Panc1 (cell line): ENCODE measurements at regions of chr2 and their contacts with region 1.

Region 1: DNA sequence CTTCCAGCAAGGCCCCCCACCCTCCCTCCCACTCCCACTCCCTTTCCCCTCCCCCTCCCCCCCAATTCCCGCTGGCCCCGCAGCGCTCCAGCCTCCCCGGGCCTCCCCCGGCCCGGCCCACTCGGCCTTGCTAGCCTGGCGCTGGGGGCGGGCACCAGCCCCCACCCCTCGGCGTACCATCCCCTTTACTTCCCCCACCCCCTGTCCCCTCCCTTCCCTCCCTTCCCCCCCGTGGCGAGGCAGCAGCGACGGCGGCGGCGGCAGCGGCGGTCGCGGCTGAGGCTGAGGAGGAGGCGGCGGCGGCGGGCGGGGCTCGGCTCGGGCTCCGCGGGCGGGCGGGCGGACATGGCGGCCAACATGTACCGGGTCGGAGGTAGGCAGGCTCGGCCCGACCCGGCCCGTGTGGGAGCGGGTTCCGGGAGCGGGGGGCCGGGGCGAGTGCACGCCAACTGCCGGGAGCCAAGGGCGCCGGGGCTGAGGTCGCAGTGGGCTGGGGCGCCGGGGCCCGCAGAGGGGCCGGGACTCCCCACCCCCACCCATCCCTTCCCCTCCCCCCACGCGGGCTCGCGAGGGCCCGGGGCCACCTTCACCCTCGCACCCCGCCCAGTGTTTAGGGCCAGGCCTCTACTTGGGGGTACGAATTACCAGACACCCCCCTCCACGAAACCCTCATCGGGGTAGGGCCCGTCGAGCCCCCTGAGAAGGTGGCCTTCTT is at the start of gene MTA3:
- DNase-seq: no peak
- ATAC-seq: peak; percentile 79
- H3K4me3 ChIP-seq: peak within 1 kb of the TSS; percentile 69 to 82
- H3K27ac ChIP-seq: peak within 1 kb of the TSS; percentile 95
- H3K4me1 ChIP-seq: peaks cover 28% of the 10 kb centered on the region
- H3K27me3 ChIP-seq: no peaks in the 10 kb centered on the region
- CTCF ChIP-seq: no peak
- total RNA-seq, gene MTA3: 65.6 TPM

Region 2: DNA sequence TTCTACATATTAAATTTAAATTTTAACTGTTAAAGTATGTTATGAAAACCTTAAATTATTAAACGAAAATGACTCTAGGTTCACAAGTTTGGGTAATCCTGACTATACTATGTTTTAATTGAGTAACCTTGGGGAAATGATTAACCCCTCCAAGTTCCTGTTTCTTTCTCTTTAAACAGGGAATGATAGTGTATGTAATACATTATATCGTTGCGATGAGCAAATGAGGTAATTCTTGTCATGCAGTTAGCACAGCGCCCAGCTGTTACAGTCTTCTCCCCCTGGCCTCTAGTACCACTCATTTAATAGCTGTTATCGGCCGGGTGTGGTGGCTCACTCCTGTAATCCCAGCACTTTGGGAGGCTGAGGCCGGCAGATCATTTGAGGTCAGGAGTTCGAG is 80.2 kb after region 1 on chr2:
- CTCF ChIA-PET with region 1: no interaction called
- POLR2A ChIA-PET with region 1: interaction called, 13 read pairs
- in situ Hi-C with region 1: no loop called
- intact Hi-C with region 1: no loop called
- DNase-seq: no peak
- ATAC-seq: no peak
- H3K4me3 ChIP-seq: no peak overlapping the region
- H3K27ac ChIP-seq: no peak overlapping the region
- H3K4me1 ChIP-seq: no peaks in the 10 kb centered on the region
- H3K27me3 ChIP-seq: no peaks in the 10 kb centered on the region
- CTCF ChIP-seq: no peak

Region 3: DNA sequence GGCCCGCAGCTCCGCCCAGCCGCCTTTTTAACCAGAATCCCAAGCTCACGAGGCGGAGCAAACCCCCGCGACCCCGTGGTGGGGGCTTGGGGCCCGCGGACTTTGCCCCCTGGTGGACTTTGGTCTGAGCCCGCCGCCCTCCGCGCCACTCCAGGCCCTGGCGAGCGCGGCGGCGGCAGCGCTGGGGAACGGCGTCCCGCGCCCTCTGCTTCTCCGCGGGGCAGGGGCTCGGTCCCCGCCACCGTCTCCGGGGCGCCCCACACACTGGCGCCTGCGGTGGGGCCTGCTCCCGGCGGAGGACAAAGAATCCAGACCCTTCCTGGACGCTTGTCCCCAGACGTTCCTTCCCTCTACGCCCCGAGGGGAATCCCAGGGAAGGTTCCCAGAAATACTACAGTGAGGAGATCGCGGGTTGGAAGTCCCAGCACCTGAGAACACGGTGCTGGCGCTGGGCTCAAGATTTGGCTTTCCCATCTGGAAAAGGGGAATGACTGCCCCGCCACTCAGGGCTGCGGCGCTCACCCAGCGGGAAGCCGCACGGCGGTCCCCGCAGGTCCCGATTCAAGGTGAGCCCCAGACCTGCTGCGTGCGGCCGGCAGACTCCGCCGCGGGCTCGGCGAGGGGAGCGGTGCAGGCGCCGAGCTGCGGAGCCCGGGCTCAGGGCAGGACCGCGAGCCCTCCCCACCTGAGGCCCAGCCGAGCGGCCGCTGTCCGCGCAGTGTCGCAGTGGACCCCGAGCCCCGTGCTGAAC is 224.2 kb after region 1 on chr2 and contains the start of gene HAAO:
- CTCF ChIA-PET with region 1: no interaction called
- POLR2A ChIA-PET with region 1: no interaction called
- in situ Hi-C with region 1: no loop called
- intact Hi-C with region 1: no loop called
- DNase-seq: no peak
- ATAC-seq: peak; percentile 64
- H3K4me3 ChIP-seq: peak within 1 kb of the TSS; percentile 41 to 49
- H3K27ac ChIP-seq: no peak within 1 kb of the TSS
- H3K4me1 ChIP-seq: no peaks in the 10 kb centered on the region
- H3K27me3 ChIP-seq: no peaks in the 10 kb centered on the region
- CTCF ChIP-seq: no peak; the same call in 1 of the 2 replicates
- total RNA-seq, gene HAAO: 0.74 TPM

Region 4: GRCh38 chr2:43792653-43793052 is 1224.1 kb after region 1 on chr2:
- CTCF ChIA-PET with region 1: no interaction called
- POLR2A ChIA-PET with region 1: no interaction called
- in situ Hi-C with region 1: no loop called
- intact Hi-C with region 1: no loop called
- DNase-seq: no peak
- ATAC-seq: no peak
- H3K4me3 ChIP-seq: no peak overlapping the region
- H3K27ac ChIP-seq: no peak overlapping the region
- H3K4me1 ChIP-seq: no peaks in the 10 kb centered on the region
- H3K27me3 ChIP-seq: no peaks in the 10 kb centered on the region
- CTCF ChIP-seq: no peak